ENCODE measurements at regions of chr5 and their contacts with region 1.

Region 1: GRCh38 chr5:96781031-96781937 is 26.5 kb downstream of the ERAP1 start:
- DNase-seq: peak; percentile 39
- ATAC-seq: peak; percentile 94
- H3K4me3 ChIP-seq: no peak overlapping the region
- H3K27ac ChIP-seq: peak overlapping the region; percentile 47
- H3K4me1 ChIP-seq: peaks cover 17% of the 10 kb centered on the region
- H3K27me3 ChIP-seq: no peaks in the 10 kb centered on the region
- CTCF ChIP-seq: no peak
- EP300 ChIP-seq: 0 out of 4 replicates have a peak, but pooled peaks of 1 of the 2 experiments have one; percentile 21
- POLR2A ChIP-seq: no peak
- RAD21 ChIP-seq: no peak

Region 2: DNA sequence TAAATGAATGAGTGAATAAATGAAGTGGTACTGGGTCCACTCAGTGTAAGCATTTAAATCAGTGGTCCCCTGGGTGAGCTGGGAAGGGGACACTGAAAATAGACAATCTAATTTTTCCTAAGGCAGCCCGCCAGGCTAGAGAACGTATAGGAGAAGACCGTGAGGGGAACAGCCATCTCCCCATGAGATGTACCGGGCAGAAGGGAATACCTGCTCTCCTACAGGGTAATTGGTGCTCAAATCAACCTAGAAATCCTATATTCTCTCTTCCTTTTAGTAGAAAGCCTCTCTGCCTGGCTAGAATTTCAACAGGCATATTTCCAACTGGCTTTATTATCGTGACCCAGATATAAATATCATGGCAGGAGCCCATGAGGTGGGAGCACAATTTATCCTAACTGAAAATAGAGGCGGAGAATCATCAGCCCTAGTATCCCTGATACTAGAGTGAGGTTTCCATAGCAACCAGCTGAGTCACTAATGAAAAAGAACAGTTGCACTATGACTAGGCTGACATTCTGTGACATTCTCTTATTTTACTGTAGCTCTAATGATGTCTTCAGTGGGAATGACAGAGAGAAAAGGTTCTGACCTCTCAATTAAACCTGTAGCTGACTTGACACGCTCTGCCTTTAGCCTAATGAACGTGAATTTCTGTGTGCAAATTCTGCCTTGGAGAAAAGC is 215.6 kb before region 1 on chr5:
- CTCF ChIA-PET with region 1: no interaction called
- POLR2A ChIA-PET with region 1: no interaction called
- in situ Hi-C with region 1: no loop called
- intact Hi-C with region 1: no loop called
- DNase-seq: no peak
- ATAC-seq: no peak
- H3K4me3 ChIP-seq: no peak overlapping the region
- H3K27ac ChIP-seq: no peak overlapping the region
- H3K4me1 ChIP-seq: no peaks in the 10 kb centered on the region
- H3K27me3 ChIP-seq: no peaks in the 10 kb centered on the region; a peak in 2 of 5 replicates
- CTCF ChIP-seq: no peak
- EP300 ChIP-seq: no peak
- POLR2A ChIP-seq: no peak
- RAD21 ChIP-seq: no peak

Region 3: DNA sequence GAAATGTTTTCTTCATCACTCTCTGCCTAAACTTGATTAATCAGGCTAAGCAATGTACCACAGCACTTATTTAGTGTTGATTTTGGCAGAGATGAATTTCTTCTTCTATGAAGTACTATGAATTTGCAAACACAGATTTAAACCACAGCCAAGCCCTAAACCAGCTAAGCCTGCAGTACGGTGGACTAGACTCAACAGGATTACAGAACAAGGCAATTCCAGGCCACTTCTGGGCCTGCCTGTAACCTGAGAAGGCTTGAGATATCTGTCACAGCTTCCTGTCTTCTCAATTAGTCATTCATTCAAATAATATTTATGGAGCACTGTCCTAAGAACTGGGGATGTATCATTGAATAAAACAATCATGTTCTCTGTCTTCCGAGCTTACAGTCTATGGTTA is 151.5 kb before region 1 on chr5:
- CTCF ChIA-PET with region 1: no interaction called
- POLR2A ChIA-PET with region 1: no interaction called
- in situ Hi-C with region 1: no loop called
- intact Hi-C with region 1: no loop called
- DNase-seq: peak; percentile 7
- ATAC-seq: peak; percentile 66
- H3K4me3 ChIP-seq: no peak overlapping the region
- H3K27ac ChIP-seq: no peak overlapping the region
- H3K4me1 ChIP-seq: peaks cover 23% of the 10 kb centered on the region
- H3K27me3 ChIP-seq: no peaks in the 10 kb centered on the region
- CTCF ChIP-seq: no peak
- EP300 ChIP-seq: no peak
- POLR2A ChIP-seq: no peak
- RAD21 ChIP-seq: no peak

Region 4: GRCh38 chr5:96768708-96769251 is 12.5 kb before region 1 on chr5:
- CTCF ChIA-PET with region 1: no interaction called
- POLR2A ChIA-PET with region 1: no interaction called
- in situ Hi-C with region 1: no loop called
- intact Hi-C with region 1: loop called (anchors 1 kb)
- DNase-seq: no peak
- ATAC-seq: no peak
- H3K4me3 ChIP-seq: no peak overlapping the region
- H3K27ac ChIP-seq: no peak overlapping the region
- H3K4me1 ChIP-seq: 0 out of 2 replicates have a peak, but pooled peaks cover 6% of the 10 kb centered on the region
- H3K27me3 ChIP-seq: no peaks in the 10 kb centered on the region
- CTCF ChIP-seq: no peak
- EP300 ChIP-seq: no peak
- POLR2A ChIP-seq: no peak
- RAD21 ChIP-seq: no peak